Activated T-helper 2 cell treated with anti-CD3 and anti-CD28 coated beads, Interferon-gamma antibody, Interleukin-2, Interleukin-4, amounts not matched to agents 10 μg/mL and 5 μg/mL and 100 μg/mL, durations not matched to agents 14 hours and 24 hours and 36 hours (primary cell): ENCODE measurements at regions of chr2 and their contacts with region 1.

Region 1: GRCh38 chr2:230411570-230412370 is 4.2 kb upstream of the SP100 start:
- DNase-seq: peak; percentile 74
- H3K4me3 Mint-ChIP-seq: peak overlapping the region; percentile 98
- H3K27ac Mint-ChIP-seq: peak overlapping the region; percentile 100
- H3K4me1 Mint-ChIP-seq: peaks cover 61% of the 10 kb centered on the region
- H3K27me3 Mint-ChIP-seq: no peaks in the 10 kb centered on the region

Region 2: GRCh38 chr2:230319211-230319862 is 92.4 kb before region 1 on chr2:
- intact Hi-C with region 1: loop called (anchors 2 kb)
- DNase-seq: peak; percentile 79
- H3K4me3 Mint-ChIP-seq: peak overlapping the region; percentile 61
- H3K27ac Mint-ChIP-seq: peak overlapping the region; percentile 94
- H3K4me1 Mint-ChIP-seq: peaks cover 60% of the 10 kb centered on the region
- H3K27me3 Mint-ChIP-seq: no peaks in the 10 kb centered on the region

Region 3: DNA sequence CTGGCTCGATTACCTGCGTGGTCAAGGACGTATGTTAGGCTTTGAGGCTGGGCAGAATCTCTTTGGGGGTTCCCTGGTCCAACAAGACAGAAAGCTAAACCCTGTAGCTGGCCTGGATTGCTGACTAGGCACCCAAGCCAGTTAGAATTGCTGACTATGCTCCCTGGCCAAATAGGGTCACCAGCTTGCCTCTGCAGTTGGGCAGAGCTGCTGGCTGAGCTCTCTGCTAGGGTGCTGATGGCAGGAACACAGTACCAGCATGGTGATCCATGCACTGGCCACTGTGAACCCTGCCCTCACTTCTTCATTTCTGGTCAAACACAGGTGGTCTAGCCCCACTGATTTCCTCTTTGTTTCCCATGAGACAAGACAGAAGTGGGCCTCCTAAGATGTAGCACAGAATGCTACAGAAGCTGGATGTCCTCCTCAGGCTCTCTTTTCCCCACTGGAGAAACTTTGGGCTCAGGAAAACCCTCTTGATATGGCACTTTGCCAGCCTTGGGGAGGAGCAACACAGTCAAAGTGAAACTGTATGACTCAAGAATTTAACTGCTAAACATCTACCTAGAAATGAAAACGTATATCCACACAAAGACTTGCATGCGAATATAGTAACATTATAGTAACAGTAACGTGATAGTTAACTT is 64.0 kb before region 1 on chr2:
- intact Hi-C with region 1: loop called (anchors 5 kb)
- DNase-seq: peak; percentile 45
- H3K4me3 Mint-ChIP-seq: peak overlapping the region; percentile 61
- H3K27ac Mint-ChIP-seq: peak overlapping the region; percentile 94
- H3K4me1 Mint-ChIP-seq: peaks cover 73% of the 10 kb centered on the region
- H3K27me3 Mint-ChIP-seq: no peaks in the 10 kb centered on the region

Region 4: DNA sequence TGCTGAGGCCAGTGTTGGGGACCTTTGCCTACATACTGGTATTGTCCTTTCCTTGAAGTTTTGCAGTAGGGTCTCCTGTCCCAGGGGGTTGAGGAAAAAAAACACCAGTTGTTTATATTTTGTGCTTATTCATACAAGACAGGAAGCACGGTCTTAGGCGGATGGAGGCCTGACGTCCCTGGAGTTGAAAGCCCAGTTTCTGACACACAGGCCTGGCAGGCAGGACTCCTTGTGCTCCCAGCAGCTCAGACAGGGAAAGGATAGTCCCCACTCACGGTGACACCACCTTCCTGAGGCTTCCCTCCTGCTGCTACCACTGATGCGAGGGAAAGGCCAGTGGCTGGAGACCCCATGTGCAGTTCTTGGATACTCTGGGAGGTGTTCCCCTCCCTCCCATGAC is 11.3 kb before region 1 on chr2:
- intact Hi-C with region 1: no loop called
- DNase-seq: no peak
- H3K4me3 Mint-ChIP-seq: no peak overlapping the region
- H3K27ac Mint-ChIP-seq: no peak overlapping the region
- H3K4me1 Mint-ChIP-seq: no peaks in the 10 kb centered on the region
- H3K27me3 Mint-ChIP-seq: no peaks in the 10 kb centered on the region

Region 5: DNA sequence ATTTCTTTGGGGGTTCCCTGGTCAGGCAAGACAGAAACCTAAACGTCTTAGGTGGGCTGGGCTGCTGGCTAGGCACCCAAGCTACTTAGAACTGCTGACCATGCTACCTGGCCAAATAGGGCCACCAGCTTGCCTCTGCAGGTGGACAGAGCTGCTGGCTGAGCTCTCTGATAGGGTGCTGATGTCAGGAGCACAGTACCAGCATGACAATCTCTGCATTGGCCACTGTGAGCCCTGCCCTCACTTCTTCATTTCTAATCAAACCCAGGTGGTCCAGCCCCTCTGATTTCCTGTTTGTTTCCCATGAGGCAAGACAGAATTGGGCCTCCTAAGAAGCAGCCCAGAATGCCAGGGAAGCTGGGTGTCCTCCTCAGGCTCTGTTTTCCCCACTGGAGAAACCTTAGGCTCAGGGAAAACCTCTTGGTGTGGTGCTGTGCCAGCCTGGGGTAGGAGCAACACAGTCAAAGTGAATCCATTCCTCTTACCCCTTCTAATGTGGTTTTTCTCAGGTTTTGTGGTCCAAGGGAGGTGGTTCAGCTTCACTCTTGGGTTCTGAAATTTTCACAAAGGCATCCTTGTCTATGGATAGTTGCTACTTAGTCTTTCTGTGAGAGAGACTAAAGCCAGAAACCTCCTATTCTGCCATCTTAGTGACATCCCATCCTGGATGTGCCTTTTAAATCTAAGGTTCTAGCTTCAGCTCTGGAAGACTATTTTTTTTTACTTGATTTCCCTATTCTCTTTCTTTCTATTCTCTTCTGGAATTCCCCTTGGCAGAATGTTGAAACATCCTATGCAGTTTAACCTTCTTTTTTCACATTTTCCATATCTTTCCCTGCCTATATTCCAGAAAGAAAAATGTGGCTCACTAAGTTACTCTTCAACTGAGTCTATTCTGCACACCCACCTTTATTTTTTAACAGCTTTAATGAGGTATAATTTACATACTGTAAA is 19.5 kb after region 1 on chr2:
- intact Hi-C with region 1: loop called (anchors 2 kb)
- DNase-seq: no peak
- H3K4me3 Mint-ChIP-seq: no peak overlapping the region
- H3K27ac Mint-ChIP-seq: peak overlapping the region; percentile 38
- H3K4me1 Mint-ChIP-seq: peaks cover 39% of the 10 kb centered on the region
- H3K27me3 Mint-ChIP-seq: no peaks in the 10 kb centered on the region

Region 6: GRCh38 chr2:230472621-230473018 is 60.9 kb after region 1 on chr2:
- intact Hi-C with region 1: loop called (anchors 1 kb)
- DNase-seq: no peak
- H3K4me3 Mint-ChIP-seq: peak overlapping the region; percentile 10
- H3K27ac Mint-ChIP-seq: peak overlapping the region; percentile 91
- H3K4me1 Mint-ChIP-seq: peaks cover 44% of the 10 kb centered on the region
- H3K27me3 Mint-ChIP-seq: no peaks in the 10 kb centered on the region

Region 7: DNA sequence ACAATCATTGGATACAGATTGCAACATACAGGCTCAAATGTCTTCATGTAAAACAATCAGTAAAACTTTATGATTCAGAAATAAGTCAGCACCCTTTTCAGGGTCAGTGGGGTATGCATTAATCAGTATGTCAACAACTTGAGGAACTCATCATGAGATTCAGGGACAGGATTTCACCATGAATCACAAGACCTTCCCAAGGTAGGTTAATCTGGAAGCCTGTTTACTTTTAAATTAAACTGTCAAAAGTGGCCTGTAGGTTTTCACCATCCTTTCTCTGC is 109.0 kb after region 1 on chr2:
- intact Hi-C with region 1: no loop called
- DNase-seq: no peak
- H3K4me3 Mint-ChIP-seq: no peak overlapping the region
- H3K27ac Mint-ChIP-seq: no peak overlapping the region
- H3K4me1 Mint-ChIP-seq: no peaks in the 10 kb centered on the region
- H3K27me3 Mint-ChIP-seq: no peaks in the 10 kb centered on the region